ENCODE measurements at regions of chr1 and their contacts with region 1.

Region 1: GRCh38 chr1:212070720-212071302 is 35.3 kb downstream of the DTL start:
- DNase-seq: peak in 2 of 4 experiments; percentile 37 to 47
- ATAC-seq: peak; percentile 86
- H3K4me3 ChIP-seq: no peak overlapping the region
- H3K27ac ChIP-seq: no peak overlapping the region
- H3K4me1 ChIP-seq: no peaks in the 10 kb centered on the region
- H3K27me3 ChIP-seq: no peaks in the 10 kb centered on the region
- CTCF ChIP-seq: peak; percentile 44 to 90 (median 48); a peak in 4 of 6 replicates
- EP300 ChIP-seq: no peak
- POLR2A ChIP-seq: no peak
- RAD21 ChIP-seq: peak; percentile 95 to 99

Region 2: GRCh38 chr1:212089560-212090163 is 18.9 kb after region 1 on chr1:
- CTCF ChIA-PET with region 1: no interaction called
- POLR2A ChIA-PET with region 1: interaction called, 10 read pairs
- in situ Hi-C with region 1: no loop called
- intact Hi-C with region 1: no loop called
- DNase-seq: no peak
- ATAC-seq: no peak
- H3K4me3 ChIP-seq: no peak overlapping the region
- H3K27ac ChIP-seq: no peak overlapping the region
- H3K4me1 ChIP-seq: 0 out of 5 replicates have a peak, but pooled peaks cover 0 to 3% of the 10 kb centered on the region in 2 experiments
- H3K27me3 ChIP-seq: no peaks in the 10 kb centered on the region
- CTCF ChIP-seq: no peak
- EP300 ChIP-seq: no peak
- POLR2A ChIP-seq: no peak
- RAD21 ChIP-seq: no peak

Region 3: DNA sequence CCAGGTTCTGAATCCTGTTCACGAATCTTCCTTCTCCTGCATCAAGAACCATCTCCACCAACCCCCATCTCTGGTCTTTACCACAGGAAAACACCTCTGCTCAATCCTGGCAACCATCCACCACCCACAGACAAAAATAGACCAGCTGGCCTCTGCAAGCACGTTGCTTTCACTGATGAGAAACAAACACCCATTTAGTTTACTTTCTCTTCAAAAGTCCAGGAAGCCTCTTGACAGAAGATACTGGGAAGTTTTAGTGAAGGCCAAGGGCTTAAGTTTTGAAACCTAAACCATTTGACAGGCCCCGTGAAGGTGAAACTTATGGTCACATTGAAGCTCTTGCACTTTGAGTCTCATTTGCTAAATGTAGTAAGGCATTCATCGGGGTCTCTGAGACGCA is 91.8 kb after region 1 on chr1:
- CTCF ChIA-PET with region 1: no interaction called
- POLR2A ChIA-PET with region 1: no interaction called
- in situ Hi-C with region 1: no loop called
- intact Hi-C with region 1: loop called (anchors 10 kb)
- DNase-seq: peak in 1 of 4 experiments; percentile 47
- ATAC-seq: no peak
- H3K4me3 ChIP-seq: no peak overlapping the region
- H3K27ac ChIP-seq: no peak overlapping the region
- H3K4me1 ChIP-seq: peaks cover 33 to 49% of the 10 kb centered on the region in 2 experiments
- H3K27me3 ChIP-seq: no peaks in the 10 kb centered on the region
- CTCF ChIP-seq: no peak
- EP300 ChIP-seq: no peak
- POLR2A ChIP-seq: no peak
- RAD21 ChIP-seq: no peak; a peak in 1 of 4 replicates

Region 4: DNA sequence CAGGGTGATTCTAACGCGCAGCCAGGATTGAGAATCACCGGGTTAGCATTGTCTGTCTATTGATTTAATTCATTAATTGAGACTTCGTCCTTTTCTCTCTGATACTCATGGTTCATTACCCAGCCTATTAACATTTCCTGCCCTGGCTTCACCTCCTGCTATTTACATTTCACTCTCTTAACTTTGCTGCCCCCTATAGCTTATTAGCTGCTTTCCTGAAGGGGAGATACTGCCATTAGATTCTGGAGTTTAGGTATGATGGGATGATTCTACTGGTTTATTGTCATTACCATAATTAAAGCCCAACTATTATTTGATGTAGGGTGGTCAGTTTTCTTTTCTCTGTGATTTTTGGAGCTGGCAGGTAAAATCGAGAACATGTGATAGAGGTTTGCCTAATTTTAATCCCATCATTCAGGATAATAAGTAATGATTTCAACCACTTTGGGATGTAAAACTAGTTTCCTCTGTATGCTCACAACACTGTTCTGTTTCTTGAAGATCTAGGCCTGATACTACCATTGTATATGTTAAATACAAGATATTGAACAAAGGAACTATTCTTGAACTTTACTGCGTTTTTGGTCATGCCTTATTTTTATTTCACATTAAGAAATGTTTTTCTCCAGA is 220.8 kb after region 1 on chr1:
- CTCF ChIA-PET with region 1: interaction called, 47 read pairs
- POLR2A ChIA-PET with region 1: interaction called, 9 read pairs
- in situ Hi-C with region 1: no loop called
- intact Hi-C with region 1: loop called (anchors 1 kb)
- DNase-seq: peak; percentile 37 to 70 (median 51)
- ATAC-seq: peak; percentile 74
- H3K4me3 ChIP-seq: no peak overlapping the region
- H3K27ac ChIP-seq: no peak overlapping the region
- H3K4me1 ChIP-seq: peaks cover 6 to 50% of the 10 kb centered on the region in 2 experiments
- H3K27me3 ChIP-seq: no peaks in the 10 kb centered on the region
- CTCF ChIP-seq: peak; percentile 71 to 95 (median 78); a peak in 5 of 6 replicates
- EP300 ChIP-seq: no peak
- POLR2A ChIP-seq: no peak
- RAD21 ChIP-seq: peak; percentile 96 to 98

Region 5: DNA sequence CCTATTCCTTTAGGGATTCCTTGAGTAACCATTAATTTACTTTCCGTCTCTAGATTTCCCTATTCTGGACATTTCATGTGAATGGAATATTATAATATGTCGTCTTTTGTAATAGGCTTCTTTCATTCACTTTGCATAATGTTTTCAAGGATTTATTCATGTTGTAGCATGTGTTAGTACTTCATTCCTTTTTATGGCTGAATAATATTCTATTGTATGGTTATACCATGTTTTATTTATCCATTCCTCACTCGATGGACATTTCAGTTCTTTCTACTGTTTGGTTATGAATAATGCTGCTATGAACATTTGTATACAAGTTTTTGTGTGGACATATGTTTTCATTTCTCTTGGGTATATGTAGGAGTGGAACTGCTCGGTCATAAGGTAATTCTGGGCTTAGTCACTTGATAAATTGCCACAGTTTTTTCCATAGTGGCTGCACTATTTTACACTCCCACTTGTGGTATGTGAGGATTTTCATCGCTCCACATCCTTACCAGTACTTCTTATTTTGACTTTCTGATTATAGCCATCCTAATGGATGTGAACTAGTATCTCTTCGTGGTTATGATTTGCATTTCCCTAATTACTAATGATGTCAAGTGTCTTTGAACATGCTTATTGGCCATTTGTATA is 232.1 kb after region 1 on chr1:
- CTCF ChIA-PET with region 1: no interaction called
- POLR2A ChIA-PET with region 1: no interaction called
- in situ Hi-C with region 1: loop called (anchors 5 kb)
- intact Hi-C with region 1: no loop called
- DNase-seq: no peak
- ATAC-seq: peak; percentile 50; the same call in 1 of the 3 replicates
- H3K4me3 ChIP-seq: no peak overlapping the region
- H3K27ac ChIP-seq: no peak overlapping the region
- H3K4me1 ChIP-seq: 0 out of 5 replicates have a peak, but pooled peaks cover 0 to 3% of the 10 kb centered on the region in 2 experiments
- H3K27me3 ChIP-seq: no peaks in the 10 kb centered on the region
- CTCF ChIP-seq: no peak
- EP300 ChIP-seq: no peak
- POLR2A ChIP-seq: no peak
- RAD21 ChIP-seq: no peak

Region 6: DNA sequence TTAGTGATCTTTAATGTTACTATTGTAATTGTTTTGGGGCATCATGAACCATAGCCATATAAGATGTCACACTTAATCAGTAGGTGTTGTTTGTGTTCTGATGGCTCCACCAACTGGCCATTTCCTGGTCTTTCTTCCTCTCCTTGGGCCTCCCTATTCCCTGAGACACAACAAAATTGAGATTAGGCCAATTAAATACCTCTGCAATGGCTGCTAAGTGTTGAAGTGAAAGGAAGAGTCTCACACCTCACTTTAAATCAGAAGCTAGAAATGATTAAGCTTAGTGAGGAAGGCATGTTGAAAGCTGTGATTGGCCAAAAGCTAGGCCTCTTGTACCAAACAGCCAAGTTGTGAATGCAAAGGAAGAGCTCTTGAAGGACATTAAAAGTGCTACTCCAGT is 245.1 kb after region 1 on chr1:
- CTCF ChIA-PET with region 1: interaction called, 5 read pairs
- POLR2A ChIA-PET with region 1: no interaction called
- in situ Hi-C with region 1: no loop called
- intact Hi-C with region 1: loop called (anchors 2 kb)
- DNase-seq: peak in 1 of 4 experiments; percentile 55
- ATAC-seq: peak; percentile 89
- H3K4me3 ChIP-seq: no peak overlapping the region
- H3K27ac ChIP-seq: no peak overlapping the region
- H3K4me1 ChIP-seq: no peaks in the 10 kb centered on the region
- H3K27me3 ChIP-seq: no peaks in the 10 kb centered on the region
- CTCF ChIP-seq: peak; percentile 42 to 67 (median 48); a peak in 5 of 6 replicates
- EP300 ChIP-seq: no peak
- POLR2A ChIP-seq: no peak
- RAD21 ChIP-seq: peak; percentile 62 to 80

Region 7: DNA sequence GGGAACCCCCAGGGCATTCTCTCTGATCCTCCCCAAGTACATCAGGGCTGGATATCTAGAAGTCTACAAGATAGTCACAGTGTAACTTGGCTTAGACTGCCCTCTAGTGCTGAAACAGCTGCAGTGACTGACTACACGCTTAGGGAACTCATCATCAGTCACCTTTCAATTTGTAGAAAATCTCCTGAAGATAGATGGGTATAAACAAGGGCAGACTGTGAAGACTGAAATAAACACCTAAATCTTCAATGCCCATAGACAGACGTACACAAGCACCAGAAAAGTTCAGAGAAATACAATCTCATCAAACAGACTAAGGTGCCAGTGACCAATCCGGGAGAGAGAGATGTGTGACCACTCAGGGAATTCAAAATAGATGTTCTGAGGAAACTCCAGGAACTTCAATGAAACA is 297.3 kb after region 1 on chr1:
- CTCF ChIA-PET with region 1: interaction called, 3 read pairs
- POLR2A ChIA-PET with region 1: no interaction called
- in situ Hi-C with region 1: no loop called
- intact Hi-C with region 1: loop called (anchors 2 kb)
- DNase-seq: peak; percentile 68 to 83 (median 71)
- ATAC-seq: peak; percentile 98
- H3K4me3 ChIP-seq: no peak overlapping the region
- H3K27ac ChIP-seq: no peak overlapping the region
- H3K4me1 ChIP-seq: no peaks in the 10 kb centered on the region
- H3K27me3 ChIP-seq: no peaks in the 10 kb centered on the region
- CTCF ChIP-seq: peak; percentile 82 to 85 (median 83)
- EP300 ChIP-seq: no peak
- POLR2A ChIP-seq: no peak
- RAD21 ChIP-seq: peak; percentile 45 to 90

Measured in K562 (cell line).